Activated naive CD4-positive, alpha-beta T cell treated with anti-CD3 and anti-CD28 coated beads for 36 hours (primary cell): ENCODE measurements at regions of chr6 and their contacts with region 1.

Region 1: DNA sequence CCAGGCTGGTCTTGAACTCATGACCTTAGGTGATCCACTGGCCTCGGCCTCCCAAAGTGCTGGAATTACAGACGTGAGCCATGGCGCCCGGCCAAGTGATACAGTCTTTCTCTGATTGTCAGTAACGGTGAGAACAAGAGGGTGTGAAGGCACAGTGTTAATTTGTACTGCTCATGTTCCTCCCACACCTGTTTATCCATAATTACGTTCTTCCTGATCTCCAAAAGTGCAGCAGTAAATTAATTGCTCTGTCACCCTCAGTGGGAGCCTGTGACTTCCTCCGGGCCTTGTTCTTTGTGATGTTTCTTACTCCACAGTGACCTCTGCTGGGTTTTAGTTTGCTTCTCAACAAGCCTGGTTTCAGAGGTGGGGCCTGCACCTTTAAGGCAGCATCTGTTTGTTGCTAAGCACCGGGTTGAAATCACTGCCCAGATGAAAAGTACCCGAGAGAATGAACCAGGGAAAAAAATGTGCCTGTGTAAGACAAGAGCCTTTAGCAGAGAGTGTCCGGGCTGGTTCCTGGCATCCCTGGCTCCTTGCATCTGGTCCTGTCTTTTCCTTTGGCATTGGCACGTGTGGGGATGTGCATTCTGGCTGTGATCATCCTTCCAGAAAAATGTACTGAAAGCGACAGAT is 89.1 kb upstream of the CLDN20 start:
- DNase-seq: peak; percentile 81
- H3K4me3 Mint-ChIP-seq: no peak overlapping the region
- H3K27ac Mint-ChIP-seq: no peak overlapping the region
- H3K4me1 Mint-ChIP-seq: peaks cover 48% of the 10 kb centered on the region
- H3K27me3 Mint-ChIP-seq: no peaks in the 10 kb centered on the region

Region 2: GRCh38 chr6:154675602-154676088 is 499.0 kb before region 1 on chr6:
- CTCF ChIA-PET with region 1: interaction called, 5 read pairs
- intact Hi-C with region 1: loop called (anchors 1 kb)
- DNase-seq: peak; percentile 96
- H3K4me3 Mint-ChIP-seq: no peak overlapping the region
- H3K27ac Mint-ChIP-seq: no peak overlapping the region
- H3K4me1 Mint-ChIP-seq: no peaks in the 10 kb centered on the region
- H3K27me3 Mint-ChIP-seq: no peaks in the 10 kb centered on the region

Region 3: DNA sequence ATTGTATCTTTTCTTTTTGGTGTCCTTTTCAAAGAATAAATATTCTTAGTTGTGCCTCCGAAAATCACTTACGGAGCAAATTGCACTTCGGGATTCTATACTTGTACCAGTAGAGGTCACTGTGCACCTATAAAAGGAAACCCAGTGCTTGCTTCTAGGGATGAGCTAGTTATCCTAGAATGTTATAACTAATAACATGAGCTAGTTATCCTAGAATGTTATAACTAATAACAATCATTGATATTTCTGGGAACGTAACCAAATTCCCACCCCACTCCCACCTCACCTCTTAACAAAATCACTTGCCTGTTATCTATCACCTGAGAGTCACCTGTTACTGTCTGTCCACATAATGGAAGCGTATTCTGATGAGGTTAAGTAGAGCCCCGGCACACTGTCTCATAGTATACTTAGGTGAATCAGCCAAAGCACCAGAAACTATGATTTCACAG is 306.5 kb before region 1 on chr6:
- CTCF ChIA-PET with region 1: interaction called, 8 read pairs
- intact Hi-C with region 1: loop called (anchors 1 kb)
- DNase-seq: no peak
- H3K4me3 Mint-ChIP-seq: no peak overlapping the region
- H3K27ac Mint-ChIP-seq: no peak overlapping the region
- H3K4me1 Mint-ChIP-seq: peaks cover 18% of the 10 kb centered on the region
- H3K27me3 Mint-ChIP-seq: no peaks in the 10 kb centered on the region

Region 4: GRCh38 chr6:155130161-155130853 is 44.4 kb before region 1 on chr6:
- CTCF ChIA-PET with region 1: interaction called, 3 read pairs
- intact Hi-C with region 1: loop called (anchors 1 kb)
- DNase-seq: no peak
- H3K4me3 Mint-ChIP-seq: no peak overlapping the region
- H3K27ac Mint-ChIP-seq: peak overlapping the region; percentile 1
- H3K4me1 Mint-ChIP-seq: peaks cover 23% of the 10 kb centered on the region
- H3K27me3 Mint-ChIP-seq: no peaks in the 10 kb centered on the region

Region 5: DNA sequence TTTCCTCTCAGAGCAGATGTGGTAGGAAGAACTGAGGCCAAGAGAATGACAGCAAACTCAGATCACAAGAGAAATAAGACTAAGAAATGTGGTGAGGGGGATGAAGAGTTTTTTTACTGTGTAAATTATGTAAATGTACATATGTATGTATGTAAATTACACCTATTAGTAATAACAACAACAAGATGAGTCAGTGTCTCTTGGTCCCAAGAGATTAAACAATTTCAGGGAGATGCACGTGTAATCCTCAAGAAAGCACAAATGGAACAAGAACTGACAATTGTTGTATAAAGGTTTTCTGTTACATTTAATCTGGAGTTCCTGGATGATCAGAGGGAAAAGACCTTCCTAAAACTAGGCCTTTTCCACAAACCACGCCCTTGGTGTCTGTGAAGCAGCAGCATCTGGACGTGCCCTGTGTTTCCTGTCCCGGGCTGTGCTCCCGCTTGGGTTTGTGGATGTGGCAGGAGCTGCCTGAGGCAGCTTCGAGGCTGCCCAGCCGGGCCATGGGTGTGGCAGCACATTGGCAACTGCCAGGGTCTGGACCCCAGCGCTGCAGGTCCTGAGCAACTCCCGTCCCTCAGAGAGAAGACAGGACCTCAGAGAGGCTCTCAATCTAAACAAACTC is 90.1 kb after region 1 on chr6:
- CTCF ChIA-PET with region 1: interaction called, 11 read pairs
- intact Hi-C with region 1: loop called (anchors 5 kb)
- DNase-seq: no peak
- H3K4me3 Mint-ChIP-seq: no peak overlapping the region
- H3K27ac Mint-ChIP-seq: no peak overlapping the region
- H3K4me1 Mint-ChIP-seq: peaks cover 10% of the 10 kb centered on the region
- H3K27me3 Mint-ChIP-seq: no peaks in the 10 kb centered on the region

Region 6: DNA sequence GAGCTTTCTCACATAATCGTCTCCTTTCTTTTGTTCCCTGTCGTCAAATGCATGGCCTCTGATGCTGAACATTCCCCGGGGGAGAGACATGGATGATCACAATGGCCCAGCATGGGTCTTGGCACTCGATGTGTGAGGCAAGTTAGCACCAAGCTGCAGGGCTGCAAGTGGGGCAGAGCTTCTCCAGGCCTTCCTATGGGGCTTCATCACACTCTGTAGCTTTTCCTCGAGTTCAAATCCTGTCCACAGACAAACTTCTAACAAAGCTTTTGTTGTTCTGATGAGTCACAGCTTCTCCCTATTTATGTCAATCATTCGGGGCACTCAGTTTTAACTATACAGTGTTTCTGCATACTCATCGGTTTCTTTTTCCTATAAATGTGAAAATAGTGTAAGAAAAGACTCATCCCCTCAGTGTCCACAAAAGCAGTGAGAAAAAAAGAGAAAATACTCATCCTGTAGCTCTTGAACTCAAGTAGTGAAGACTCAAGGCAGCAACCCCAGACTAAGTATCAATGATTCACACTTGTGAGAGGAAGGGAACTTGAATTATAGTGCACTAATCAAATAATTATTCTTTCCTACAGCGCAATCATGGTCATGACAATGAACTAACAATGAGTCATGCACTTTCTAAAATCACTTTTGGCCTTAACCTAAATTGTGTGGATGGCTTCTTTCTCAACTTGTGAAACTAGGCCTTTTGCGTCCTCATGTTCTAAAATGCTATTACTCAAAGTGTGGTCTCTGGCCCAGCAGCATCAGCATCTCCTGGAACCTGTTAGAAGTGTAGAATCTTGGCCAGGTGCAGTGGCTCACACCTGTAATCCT is 349.3 kb after region 1 on chr6:
- CTCF ChIA-PET with region 1: interaction called, 4 read pairs
- intact Hi-C with region 1: loop called (anchors 1 kb)
- DNase-seq: peak; percentile 43
- H3K4me3 Mint-ChIP-seq: no peak overlapping the region
- H3K27ac Mint-ChIP-seq: peak overlapping the region; percentile 84
- H3K4me1 Mint-ChIP-seq: peaks cover 47% of the 10 kb centered on the region
- H3K27me3 Mint-ChIP-seq: no peaks in the 10 kb centered on the region